PC-9 (cell line): ENCODE measurements at regions of chr20 and their contacts with region 1.

Region 1: DNA sequence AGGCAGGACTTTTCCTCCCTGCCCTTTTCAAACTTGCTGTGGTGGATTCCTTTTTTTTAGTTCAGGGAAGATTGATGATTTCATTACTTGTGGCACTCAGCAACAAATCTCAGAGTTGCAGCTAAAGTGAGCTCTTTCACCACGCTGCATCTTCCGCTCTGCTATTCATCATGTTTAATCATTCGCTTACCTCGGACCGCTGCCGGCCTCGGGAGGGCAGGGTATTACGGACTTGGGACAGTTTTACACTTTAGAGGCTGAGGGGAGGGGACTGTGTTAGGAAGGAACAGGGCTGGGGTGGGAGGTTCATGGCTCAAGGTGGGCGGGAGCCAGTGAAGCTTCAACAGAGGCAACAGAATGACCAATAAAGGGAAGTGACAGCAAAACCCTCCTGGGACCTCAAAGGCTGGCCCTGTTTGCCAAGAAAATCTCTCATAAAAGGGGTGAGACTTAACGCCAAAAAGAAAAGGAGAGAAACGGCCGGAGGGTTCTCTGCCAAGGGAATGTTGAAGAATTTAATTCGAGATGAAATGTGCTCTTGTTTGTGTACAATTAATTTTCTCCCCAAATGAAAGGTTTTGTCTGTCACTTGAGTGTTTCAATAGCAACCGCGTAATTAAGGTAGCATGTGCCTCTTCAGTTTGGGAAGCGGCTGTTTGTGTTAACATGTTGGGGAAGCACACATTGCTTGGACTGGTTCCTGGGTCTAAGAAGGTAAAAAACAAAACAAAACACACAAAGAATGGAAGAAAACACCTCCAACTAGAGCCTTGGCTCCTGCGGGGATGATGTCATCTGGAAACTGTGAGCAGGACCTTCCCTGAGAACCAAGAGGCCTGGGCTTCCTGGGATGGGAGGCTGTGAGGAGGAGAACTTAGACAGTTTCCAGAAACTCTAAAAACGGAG is 72.5 kb upstream of the SULF2 start:
- DNase-seq: peak; percentile 70 to 76
- H3K4me3 ChIP-seq: peak overlapping the region; percentile 46
- H3K27ac ChIP-seq: peak overlapping the region; percentile 99
- H3K4me1 ChIP-seq: peaks cover 56% of the 10 kb centered on the region
- H3K27me3 ChIP-seq: no peaks in the 10 kb centered on the region
- CTCF ChIP-seq: 0 out of 2 replicates have a peak, but pooled peaks have one; percentile 14

Region 2: DNA sequence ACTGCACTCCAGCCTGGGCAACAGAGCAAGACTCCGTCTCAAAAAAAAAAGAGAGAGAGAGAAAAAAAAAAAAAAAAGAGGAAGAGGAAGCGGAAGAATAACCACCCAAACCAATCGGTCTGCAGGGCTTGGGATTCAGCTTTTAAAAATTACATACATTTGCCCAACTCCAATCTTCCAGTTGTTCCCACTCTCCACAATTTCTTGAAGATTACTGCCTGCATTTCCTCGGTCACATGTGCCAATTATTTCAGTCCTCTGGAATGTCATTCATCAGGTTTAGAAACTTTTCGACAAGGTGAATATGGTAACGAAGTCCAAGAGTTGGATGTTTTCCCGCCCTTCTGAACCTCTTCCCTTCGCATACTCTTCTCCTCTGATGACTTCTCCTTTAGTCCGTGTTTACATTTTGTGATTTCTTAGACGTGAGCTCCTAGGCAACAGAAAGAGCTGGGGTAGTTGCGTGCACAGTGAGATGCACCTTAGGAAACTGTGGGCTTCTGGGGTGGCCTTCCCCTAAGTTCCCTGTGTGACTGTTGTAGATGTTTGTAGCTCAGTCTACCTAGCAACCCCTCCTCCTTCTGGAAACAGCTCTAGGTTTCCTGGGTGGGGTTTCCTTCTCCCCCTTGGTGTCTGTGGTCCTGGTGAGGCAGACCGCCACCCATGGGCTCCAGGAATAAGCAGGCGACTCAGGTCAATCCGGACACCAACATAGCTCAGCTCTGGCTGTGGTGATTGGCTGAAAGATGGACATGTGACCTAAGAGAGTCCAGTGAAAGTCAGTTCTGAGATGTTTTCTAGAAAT is 419.0 kb before region 1 on chr20:
- CTCF ChIA-PET with region 1: no interaction called
- POLR2A ChIA-PET with region 1: interaction called, 15 read pairs
- intact Hi-C with region 1: no loop called
- DNase-seq: peak; percentile 67 to 94
- H3K4me3 ChIP-seq: 0 out of 2 replicates have a peak overlapping the region, but pooled peaks have one; percentile 1
- H3K27ac ChIP-seq: peak overlapping the region; percentile 78
- H3K4me1 ChIP-seq: peaks cover 58% of the 10 kb centered on the region
- H3K27me3 ChIP-seq: no peaks in the 10 kb centered on the region
- CTCF ChIP-seq: no peak

Region 3: GRCh38 chr20:47464380-47465101 is 393.3 kb before region 1 on chr20:
- CTCF ChIA-PET with region 1: no interaction called
- POLR2A ChIA-PET with region 1: no interaction called
- intact Hi-C with region 1: no loop called
- DNase-seq: peak; percentile 79 to 99
- H3K4me3 ChIP-seq: no peak overlapping the region; the same call in 1 of the 2 replicates
- H3K27ac ChIP-seq: peak overlapping the region; percentile 73
- H3K4me1 ChIP-seq: peaks cover 29% of the 10 kb centered on the region
- H3K27me3 ChIP-seq: no peaks in the 10 kb centered on the region
- CTCF ChIP-seq: peak; percentile 78

Region 4: DNA sequence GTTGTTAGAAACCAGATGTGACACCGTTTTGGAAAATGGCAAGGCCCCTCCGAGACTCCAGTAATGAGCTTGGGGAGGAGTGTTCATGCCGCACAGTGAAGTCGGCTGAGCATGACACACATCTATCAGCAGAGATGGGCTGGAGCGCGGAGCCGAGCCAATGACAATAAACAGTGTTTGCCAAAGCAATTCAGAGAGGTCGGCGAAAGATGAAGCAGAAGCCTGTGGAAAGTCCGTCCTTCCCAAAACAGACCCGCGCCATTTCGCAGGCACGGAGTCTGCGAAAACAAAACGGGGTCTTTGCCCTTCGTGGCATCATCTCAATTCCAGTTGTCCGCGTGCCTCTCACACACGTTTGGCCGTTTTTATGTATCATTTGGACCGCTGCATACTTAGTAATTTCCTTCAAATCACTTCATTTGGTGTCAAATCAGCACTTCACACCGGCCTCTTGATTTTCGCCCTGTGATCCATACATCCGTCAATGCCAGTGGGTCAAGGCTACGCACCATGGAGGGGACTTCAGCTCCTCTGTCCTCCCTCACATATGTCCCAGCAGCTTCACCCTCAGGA is 143.9 kb before region 1 on chr20:
- CTCF ChIA-PET with region 1: no interaction called
- POLR2A ChIA-PET with region 1: no interaction called
- intact Hi-C with region 1: no loop called
- DNase-seq: no peak
- H3K4me3 ChIP-seq: no peak overlapping the region
- H3K27ac ChIP-seq: no peak overlapping the region
- H3K4me1 ChIP-seq: no peaks in the 10 kb centered on the region
- H3K27me3 ChIP-seq: no peaks in the 10 kb centered on the region
- CTCF ChIP-seq: no peak

Region 5: GRCh38 chr20:47792021-47792618 is 65.7 kb before region 1 on chr20:
- CTCF ChIA-PET with region 1: interaction called, 3 read pairs
- POLR2A ChIA-PET with region 1: interaction called, 21 read pairs
- intact Hi-C with region 1: no loop called
- DNase-seq: peak; percentile 77 to 95
- H3K4me3 ChIP-seq: peak overlapping the region; percentile 54
- H3K27ac ChIP-seq: peak overlapping the region; percentile 95
- H3K4me1 ChIP-seq: peaks cover 90% of the 10 kb centered on the region
- H3K27me3 ChIP-seq: no peaks in the 10 kb centered on the region
- CTCF ChIP-seq: no peak

Region 6: GRCh38 chr20:47922252-47922651 is 64.4 kb after region 1 on chr20:
- CTCF ChIA-PET with region 1: no interaction called
- POLR2A ChIA-PET with region 1: no interaction called
- intact Hi-C with region 1: loop called (anchors 2 kb)
- DNase-seq: peak; percentile 49 to 92
- H3K4me3 ChIP-seq: peak overlapping the region; percentile 21; the same call in 1 of the 2 replicates
- H3K27ac ChIP-seq: peak overlapping the region; percentile 88
- H3K4me1 ChIP-seq: peaks cover 56% of the 10 kb centered on the region
- H3K27me3 ChIP-seq: no peaks in the 10 kb centered on the region
- CTCF ChIP-seq: no peak

Region 7: GRCh38 chr20:47950073-47950913 is 92.5 kb after region 1 on chr20:
- CTCF ChIA-PET with region 1: interaction called, 4 read pairs
- POLR2A ChIA-PET with region 1: no interaction called
- intact Hi-C with region 1: loop called (anchors 1 kb)
- DNase-seq: peak; percentile 81 to 98
- H3K4me3 ChIP-seq: no peak overlapping the region
- H3K27ac ChIP-seq: peak overlapping the region; percentile 95
- H3K4me1 ChIP-seq: peaks cover 42% of the 10 kb centered on the region
- H3K27me3 ChIP-seq: no peaks in the 10 kb centered on the region
- CTCF ChIP-seq: 0 out of 2 replicates have a peak, but pooled peaks have one; percentile 35